Activated B cell treated with CpG ODN at 0.5 μM for 24 hours (primary cell): ENCODE measurements at regions of chr9 and their contacts with region 1.

Region 1: DNA sequence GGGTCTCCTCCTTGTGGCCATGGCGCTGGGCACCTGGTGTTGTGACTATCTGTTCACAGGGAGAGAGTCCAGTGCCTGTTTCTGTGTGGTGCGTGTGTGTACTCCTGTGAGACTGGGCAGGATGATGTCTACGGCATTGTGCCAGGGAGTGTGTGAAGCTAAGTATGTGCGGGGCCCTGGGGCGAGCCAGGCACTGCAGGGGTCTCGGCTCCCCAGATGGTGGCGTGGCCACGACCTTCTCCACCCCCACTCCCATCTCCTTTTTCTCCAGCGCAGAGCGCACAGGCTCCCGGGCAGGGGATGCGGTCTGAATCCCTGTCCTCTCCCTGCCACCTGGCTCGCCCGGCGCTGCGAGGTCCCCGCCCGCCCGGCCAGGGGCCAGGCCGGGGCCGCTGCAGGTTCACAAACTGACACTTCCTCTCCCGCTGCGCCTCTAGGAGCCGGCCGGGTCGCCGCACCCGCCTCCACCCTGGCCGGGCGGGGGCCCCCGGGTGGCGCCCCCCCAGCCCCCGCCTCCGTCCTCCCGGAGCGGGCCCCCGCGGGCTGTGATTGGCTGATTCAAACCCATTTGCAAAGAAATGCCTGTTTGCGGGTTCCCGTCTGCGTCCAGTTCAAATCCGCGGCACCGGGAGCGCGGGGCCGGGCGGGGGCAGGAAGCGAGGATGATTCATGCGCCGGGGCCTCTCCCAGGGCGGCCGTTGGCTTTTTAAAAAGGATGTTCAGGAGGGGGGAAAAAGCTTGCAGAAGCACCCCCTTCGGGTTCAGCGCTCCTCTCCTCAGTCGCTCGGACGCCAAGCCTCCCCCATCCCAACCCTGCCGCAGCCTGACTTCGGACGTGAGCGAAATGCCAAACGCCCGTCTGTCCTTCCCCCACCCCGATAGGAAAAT is 790 bp downstream of the PHF19 start:
- DNase-seq: peak; percentile 66
- ATAC-seq: peak; percentile 74
- H3K4me3 Mint-ChIP-seq: peak overlapping the region; percentile 83
- H3K27ac Mint-ChIP-seq: peak overlapping the region; percentile 80
- H3K4me1 Mint-ChIP-seq: peaks cover 54% of the 10 kb centered on the region
- H3K27me3 Mint-ChIP-seq: peaks cover 2% of the 10 kb centered on the region
- CTCF ChIP-seq: no peak

Region 2: DNA sequence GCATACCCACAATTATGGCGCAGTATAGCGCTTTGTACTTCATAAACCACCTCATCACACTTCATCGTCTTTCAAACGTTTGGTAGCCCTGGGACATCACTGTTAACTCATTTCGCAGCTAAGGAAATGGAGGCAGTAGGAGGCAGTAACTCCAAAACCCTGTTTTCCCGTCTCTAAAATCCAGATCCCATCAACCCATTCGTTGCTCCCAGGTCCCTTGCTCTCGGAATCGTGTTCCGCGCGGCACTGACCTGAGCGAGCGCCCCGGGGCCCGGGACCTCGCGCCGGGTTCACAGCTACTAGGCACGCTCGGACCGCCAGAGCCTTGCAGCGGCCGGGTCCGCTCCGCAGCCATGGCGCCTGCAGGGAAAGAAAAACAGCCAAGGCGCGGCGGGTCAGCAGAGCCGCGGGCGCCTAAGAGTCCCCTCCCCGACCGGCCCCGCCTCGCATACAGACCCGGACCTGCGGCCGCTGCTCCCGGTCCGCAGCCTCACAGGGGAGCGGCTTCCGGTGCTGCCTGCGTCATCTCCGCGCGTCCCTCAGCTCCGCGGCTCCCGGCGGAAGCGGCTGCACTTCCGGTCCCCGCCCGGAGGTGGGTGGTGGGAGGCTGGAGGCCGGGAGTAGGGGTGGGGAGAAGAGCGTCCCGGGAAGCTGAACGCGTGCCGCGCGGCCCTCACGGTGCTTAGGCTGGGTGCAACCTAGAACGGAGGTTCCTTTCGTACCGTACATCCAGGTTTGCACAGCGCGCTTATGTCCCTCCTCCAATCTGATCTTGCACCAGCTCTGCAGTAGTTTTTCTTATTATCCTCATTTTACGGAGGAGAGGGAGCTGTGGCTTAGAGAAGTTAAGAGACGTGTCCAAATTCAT is 83.1 kb before region 1 on chr9 and contains the start of gene FBXW2:
- CTCF ChIA-PET with region 1: no interaction called
- POLR2A ChIA-PET with region 1: interaction called, 10 read pairs
- intact Hi-C with region 1: no loop called
- DNase-seq: peak; percentile 87
- ATAC-seq: peak; percentile 91
- H3K4me3 Mint-ChIP-seq: peak within 1 kb of the TSS; percentile 91
- H3K27ac Mint-ChIP-seq: peak within 1 kb of the TSS; percentile 89
- H3K4me1 Mint-ChIP-seq: peaks cover 38% of the 10 kb centered on the region
- H3K27me3 Mint-ChIP-seq: no peaks in the 10 kb centered on the region
- CTCF ChIP-seq: no peak
- total RNA-seq, gene FBXW2: 70.4 and 77.9 TPM in 2 replicates

Region 3: DNA sequence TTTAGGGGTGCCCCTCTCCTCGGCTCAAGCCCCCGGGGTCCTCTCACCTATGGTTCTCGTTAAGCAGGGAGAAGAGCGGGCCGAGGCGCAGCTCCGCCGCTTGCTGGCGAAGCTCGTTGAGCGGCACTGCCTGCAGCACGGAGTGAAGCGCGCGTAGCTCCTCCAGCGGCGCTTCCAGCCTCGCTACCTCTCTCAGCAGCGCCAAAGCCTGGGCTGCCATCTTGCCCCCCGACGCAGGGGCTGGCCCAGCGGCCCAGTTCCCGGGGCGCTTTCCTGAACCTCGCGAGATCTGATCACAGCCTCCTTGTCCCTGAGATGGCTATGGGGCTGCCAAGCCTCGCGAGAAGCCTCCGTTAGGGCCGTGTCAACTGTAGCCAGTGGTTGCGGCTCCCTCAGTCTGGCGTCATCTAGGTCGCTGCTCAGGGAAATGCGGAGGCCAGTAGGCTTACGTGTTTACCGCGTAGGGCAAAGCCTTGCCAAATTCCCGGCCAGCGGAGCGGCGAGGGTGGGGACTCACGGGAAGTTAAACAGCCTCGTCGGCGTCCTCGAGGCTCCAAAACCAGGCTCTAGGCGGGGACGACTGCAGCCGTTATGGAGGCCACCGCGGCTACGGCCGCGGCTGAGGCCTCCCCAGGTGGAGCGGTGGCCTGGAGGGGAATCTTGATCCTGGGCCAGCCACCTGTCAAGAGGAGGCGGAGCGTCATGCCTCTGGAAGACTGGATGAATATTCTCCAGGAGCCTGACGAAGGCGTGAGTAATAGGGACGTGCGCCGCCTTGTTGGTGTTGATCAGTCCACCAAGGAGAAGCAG is 33.3 kb before region 1 on chr9 and contains the start of gene PSMD5:
- CTCF ChIA-PET with region 1: no interaction called
- POLR2A ChIA-PET with region 1: interaction called, 5 read pairs
- intact Hi-C with region 1: loop called (anchors 2 kb)
- DNase-seq: peak; percentile 75
- ATAC-seq: peak; percentile 99
- H3K4me3 Mint-ChIP-seq: peak within 1 kb of the TSS; percentile 90
- H3K27ac Mint-ChIP-seq: peak within 1 kb of the TSS; percentile 91
- H3K4me1 Mint-ChIP-seq: peaks cover 42% of the 10 kb centered on the region
- H3K27me3 Mint-ChIP-seq: no peaks in the 10 kb centered on the region
- CTCF ChIP-seq: no peak
- total RNA-seq, gene PSMD5: 34.8 and 38.9 TPM in 2 replicates

Region 4: DNA sequence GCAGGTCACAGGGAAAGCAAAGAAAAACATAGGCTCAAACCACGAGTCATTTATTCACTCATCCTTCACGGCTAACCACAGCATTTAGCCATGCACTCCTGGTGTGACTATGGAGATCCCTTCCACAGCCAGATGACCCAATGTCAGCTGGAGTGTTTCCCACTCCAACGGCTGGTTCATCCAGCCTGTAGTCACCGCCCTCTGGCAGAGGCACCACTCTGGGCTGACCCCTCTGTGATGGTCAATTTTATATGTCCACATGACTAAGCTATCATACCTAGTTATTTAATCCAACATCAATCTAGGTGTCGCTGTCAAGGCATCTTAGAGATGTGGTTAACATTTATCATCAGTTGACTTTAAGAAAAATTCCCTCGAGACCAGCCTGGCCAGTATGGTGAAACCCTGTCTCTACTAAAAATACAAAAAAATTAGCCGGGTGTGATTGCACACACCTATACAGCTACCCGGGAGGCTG is 10.3 kb after region 1 on chr9:
- CTCF ChIA-PET with region 1: interaction called, 4 read pairs
- POLR2A ChIA-PET with region 1: interaction called, 33 read pairs
- intact Hi-C with region 1: loop called (anchors 1 kb)
- DNase-seq: no peak
- ATAC-seq: peak; percentile 71
- H3K4me3 Mint-ChIP-seq: peak overlapping the region; percentile 24
- H3K27ac Mint-ChIP-seq: no peak overlapping the region
- H3K4me1 Mint-ChIP-seq: peaks cover 35% of the 10 kb centered on the region
- H3K27me3 Mint-ChIP-seq: peaks cover 4% of the 10 kb centered on the region
- CTCF ChIP-seq: no peak

Region 5: DNA sequence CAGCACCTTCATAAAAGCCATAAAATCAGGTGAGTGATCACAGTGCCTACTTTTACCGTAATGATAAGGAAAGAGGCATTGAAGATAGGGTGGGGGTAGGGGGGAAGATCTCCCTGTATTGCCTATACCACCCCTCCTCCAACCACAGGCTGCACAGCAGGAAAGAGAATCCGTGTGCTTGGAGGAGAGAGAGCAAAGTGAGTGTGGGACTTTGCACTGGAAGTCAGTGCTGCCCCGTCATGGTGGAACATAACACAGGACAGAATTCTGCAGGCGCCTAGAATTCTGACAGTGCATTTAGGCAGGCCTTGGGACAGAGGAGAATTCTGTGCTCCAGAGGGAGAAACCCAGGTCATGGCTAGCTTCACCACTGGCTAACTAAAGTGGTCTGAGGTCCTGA is 177.3 kb after region 1 on chr9:
- CTCF ChIA-PET with region 1: no interaction called
- POLR2A ChIA-PET with region 1: no interaction called
- intact Hi-C with region 1: no loop called
- DNase-seq: no peak
- ATAC-seq: no peak
- H3K4me3 Mint-ChIP-seq: no peak overlapping the region
- H3K27ac Mint-ChIP-seq: no peak overlapping the region
- H3K4me1 Mint-ChIP-seq: no peaks in the 10 kb centered on the region
- H3K27me3 Mint-ChIP-seq: no peaks in the 10 kb centered on the region
- CTCF ChIP-seq: no peak